Psoas muscle (tissue), 8 donors: ENCODE measurements at regions of chr5 and their contacts with region 1.

Region 1: GRCh38 chr5:143350751-143351603 is 52.5 kb downstream of the NR3C1 start:
- DNase-seq: no peak
- ATAC-seq: peak in 3 of 4 donors; percentile 34 to 49 (median 42)
- H3K4me3 ChIP-seq: no peak overlapping the region
- H3K27ac ChIP-seq: peak overlapping the region; percentile 59
- H3K4me1 ChIP-seq: peaks cover 99% of the 10 kb centered on the region
- H3K27me3 ChIP-seq: no peaks in the 10 kb centered on the region
- CTCF ChIP-seq: no peak

Region 2: DNA sequence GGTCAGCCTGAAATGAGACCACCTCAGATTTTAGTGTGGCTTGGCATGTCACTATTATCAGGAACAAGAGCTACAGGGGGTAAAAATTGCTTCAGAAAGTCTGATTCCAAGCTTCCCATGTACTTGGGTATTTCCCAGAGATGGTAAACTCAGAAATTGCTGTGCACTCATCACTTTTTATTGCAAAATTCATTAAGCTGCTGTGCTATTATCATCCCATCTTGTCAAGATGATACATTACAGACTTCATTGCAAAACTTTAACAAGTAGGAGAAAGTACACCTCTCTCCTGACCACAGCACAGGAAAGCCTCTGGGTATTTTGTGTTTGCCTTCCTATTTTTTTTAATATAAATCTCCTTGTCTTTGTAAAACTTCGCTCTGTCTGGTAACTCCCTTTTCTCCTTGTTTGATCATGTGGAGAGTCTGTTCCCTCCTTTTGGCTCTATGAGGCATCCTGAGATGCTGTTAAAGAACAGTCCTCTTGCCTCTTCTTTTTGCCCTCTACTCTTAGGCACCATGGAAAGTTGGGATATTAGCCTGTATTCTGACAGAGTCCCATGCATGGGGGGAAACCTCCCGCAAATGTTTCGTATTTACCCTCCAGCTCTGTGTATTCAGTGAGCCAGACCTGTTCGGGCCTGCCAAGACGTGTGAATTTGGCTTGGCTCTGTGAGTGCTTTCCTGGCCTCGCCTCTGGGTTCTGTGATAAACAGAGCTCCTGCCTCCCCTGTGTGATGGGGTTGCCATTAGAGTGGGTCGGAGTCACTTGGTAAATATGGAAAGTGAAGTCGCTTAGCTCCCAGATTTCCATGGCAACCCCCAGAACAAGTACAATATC is 208.2 kb before region 1 on chr5:
- intact Hi-C with region 1: no loop called
- DNase-seq: peak; percentile 30 to 70
- ATAC-seq: peak; percentile 35 to 76 (median 59)
- H3K4me3 ChIP-seq: peak overlapping the region; percentile 16
- H3K27ac ChIP-seq: peak overlapping the region; percentile 94
- H3K4me1 ChIP-seq: peaks cover 71% of the 10 kb centered on the region
- H3K27me3 ChIP-seq: no peaks in the 10 kb centered on the region
- CTCF ChIP-seq: no peak

Region 3: DNA sequence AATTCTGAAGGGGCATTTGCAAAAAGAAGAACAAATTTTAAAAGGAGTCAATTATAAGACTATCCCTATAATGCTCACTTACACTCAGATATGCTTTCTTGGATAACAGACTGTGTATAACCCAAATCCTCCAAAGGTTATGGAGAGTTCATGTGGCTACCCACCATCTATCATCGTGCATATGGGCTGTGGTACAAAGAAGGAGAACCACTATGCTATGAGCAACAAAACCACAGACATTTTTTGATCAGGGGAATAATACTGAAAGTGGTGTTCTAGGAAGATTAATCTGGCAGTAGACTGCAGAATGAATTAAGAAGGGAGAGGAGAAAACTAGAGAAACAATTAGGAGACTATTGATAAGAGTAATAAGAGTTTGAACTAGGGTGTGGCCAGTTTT is 35.7 kb after region 1 on chr5:
- intact Hi-C with region 1: loop called in 1 of 2 experiments (anchors 5 kb)
- DNase-seq: no peak
- ATAC-seq: no peak
- H3K4me3 ChIP-seq: no peak overlapping the region
- H3K27ac ChIP-seq: no peak overlapping the region
- H3K4me1 ChIP-seq: peaks cover 76% of the 10 kb centered on the region
- H3K27me3 ChIP-seq: no peaks in the 10 kb centered on the region
- CTCF ChIP-seq: no peak